A673 (cell line): ENCODE measurements at regions of chr3 and their contacts with region 1.

Region 1: DNA sequence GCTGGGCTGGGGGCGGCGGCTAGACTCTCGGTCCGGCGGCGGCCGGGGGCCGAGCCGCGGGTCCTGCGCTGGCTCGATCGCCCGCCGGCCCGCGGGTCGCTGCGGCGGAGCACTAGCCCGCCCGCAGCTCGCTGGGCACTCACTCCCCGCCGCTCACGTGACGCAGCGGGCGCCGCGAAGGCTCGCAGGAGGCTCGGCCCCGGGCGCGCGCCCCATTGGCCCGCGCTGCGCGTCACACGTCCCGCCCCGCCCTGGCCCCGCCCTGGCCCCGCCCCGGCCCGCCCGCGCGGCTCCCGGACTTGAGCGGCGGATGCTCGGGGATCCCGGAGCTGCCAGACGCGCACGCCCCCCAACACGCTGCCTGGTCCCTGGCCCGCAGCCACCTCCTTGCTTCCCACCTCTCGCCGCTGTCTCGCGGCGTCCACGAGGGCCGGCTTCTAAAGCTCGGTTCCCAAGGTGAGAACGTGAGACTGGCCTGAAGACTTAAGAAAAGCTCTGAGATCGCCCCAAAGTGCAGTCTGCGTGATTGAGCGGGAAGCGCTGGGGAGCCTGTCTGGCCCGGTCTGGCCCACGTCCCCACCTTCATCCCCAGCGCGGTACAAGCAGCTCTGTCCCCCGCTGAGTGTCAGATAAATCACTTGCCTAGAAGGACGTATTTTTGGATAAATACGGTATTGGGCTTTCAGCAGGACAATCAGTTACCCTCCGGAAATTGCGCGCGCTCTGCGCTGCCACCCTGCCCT is at the start of gene KLF15:
- DNase-seq: peak; percentile 91
- H3K4me3 ChIP-seq: peak within 1 kb of the TSS; percentile 77
- H3K27ac ChIP-seq: peak within 1 kb of the TSS; percentile 83
- H3K4me1 ChIP-seq: peaks cover 28% of the 10 kb centered on the region
- H3K27me3 ChIP-seq: no peaks in the 10 kb centered on the region
- CTCF ChIP-seq: no peak
- total RNA-seq, gene KLF15: 32.1 and 32.6 TPM in 2 replicates

Region 2: GRCh38 chr3:126293370-126294082 is 63.9 kb before region 1 on chr3:
- CTCF ChIA-PET with region 1: no interaction called
- POLR2A ChIA-PET with region 1: interaction called, 8 read pairs
- intact Hi-C with region 1: loop called (anchors 5 kb)
- DNase-seq: peak; percentile 62
- H3K4me3 ChIP-seq: no peak overlapping the region
- H3K27ac ChIP-seq: peak overlapping the region; percentile 99
- H3K4me1 ChIP-seq: peaks cover 51% of the 10 kb centered on the region
- H3K27me3 ChIP-seq: no peaks in the 10 kb centered on the region
- CTCF ChIP-seq: no peak